Activated naive CD4-positive, alpha-beta T cell treated with anti-CD3 and anti-CD28 coated beads for 36 hours (primary cell): ENCODE measurements at regions of chr2 and their contacts with region 1.

Region 1: GRCh38 chr2:64750817-64751285 is 97.1 kb upstream of the SERTAD2 start:
- DNase-seq: peak; percentile 99
- H3K4me3 Mint-ChIP-seq: peak overlapping the region; percentile 99
- H3K27ac Mint-ChIP-seq: peak overlapping the region; percentile 89
- H3K4me1 Mint-ChIP-seq: peaks cover 30% of the 10 kb centered on the region
- H3K27me3 Mint-ChIP-seq: no peaks in the 10 kb centered on the region

Region 2: GRCh38 chr2:64144057-64145013 is 606.5 kb before region 1 on chr2 and contains the start of gene PELI1:
- CTCF ChIA-PET with region 1: no interaction called
- intact Hi-C with region 1: loop called (anchors 1 kb)
- DNase-seq: peak; percentile 98
- H3K4me3 Mint-ChIP-seq: peak within 1 kb of the TSS; percentile 94
- H3K27ac Mint-ChIP-seq: peak within 1 kb of the TSS; percentile 94
- H3K4me1 Mint-ChIP-seq: peaks cover 31% of the 10 kb centered on the region
- H3K27me3 Mint-ChIP-seq: no peaks in the 10 kb centered on the region
- total RNA-seq, gene PELI1: 25.7 to 28.0 TPM

Region 3: GRCh38 chr2:64599469-64599868 is 151.4 kb before region 1 on chr2:
- CTCF ChIA-PET with region 1: no interaction called
- intact Hi-C with region 1: no loop called
- DNase-seq: no peak
- H3K4me3 Mint-ChIP-seq: no peak overlapping the region
- H3K27ac Mint-ChIP-seq: no peak overlapping the region
- H3K4me1 Mint-ChIP-seq: peaks cover 8% of the 10 kb centered on the region
- H3K27me3 Mint-ChIP-seq: no peaks in the 10 kb centered on the region

Region 4: DNA sequence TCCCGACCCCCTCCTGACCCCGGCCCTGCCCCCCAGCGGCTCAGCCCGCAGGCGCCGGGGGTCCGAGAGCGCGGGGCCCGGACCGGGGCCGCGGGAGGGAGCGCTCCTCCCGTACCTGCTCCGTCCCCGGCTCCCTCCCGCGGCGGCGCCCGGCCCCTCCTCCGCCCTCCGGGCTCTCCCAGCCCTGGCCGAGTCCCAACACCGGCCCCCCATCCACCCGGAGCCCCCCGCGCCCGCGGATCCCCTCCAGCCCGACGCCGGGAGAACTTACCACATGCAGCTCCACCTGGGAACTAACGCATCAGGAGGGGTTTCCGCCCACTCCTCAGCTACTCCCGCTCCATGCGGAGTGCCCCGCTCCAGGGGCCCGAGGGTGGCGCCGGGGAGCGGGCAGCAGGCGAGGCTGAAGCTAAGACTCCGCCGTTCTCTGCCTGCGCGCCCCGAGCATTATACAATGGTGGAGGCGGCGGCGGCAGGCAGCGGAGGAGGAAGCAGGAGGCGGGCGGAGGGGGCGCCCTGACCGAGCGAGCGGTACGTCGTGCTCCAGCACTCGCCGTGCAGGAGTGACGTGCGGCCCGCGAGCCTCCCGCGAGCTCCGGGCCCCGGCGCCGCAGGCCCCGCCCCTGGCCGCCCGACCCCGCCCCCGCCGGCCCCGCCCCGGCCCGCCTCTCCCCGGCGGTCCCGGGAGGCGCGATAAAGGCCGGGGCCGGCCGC is 97.3 kb before region 1 on chr2 and contains the start of gene SERTAD2:
- CTCF ChIA-PET with region 1: interaction called, 37 read pairs
- intact Hi-C with region 1: loop called (anchors 1 kb)
- DNase-seq: peak; percentile 85
- H3K4me3 Mint-ChIP-seq: peak within 1 kb of the TSS; percentile 79
- H3K27ac Mint-ChIP-seq: peak within 1 kb of the TSS; percentile 83
- H3K4me1 Mint-ChIP-seq: peaks cover 74% of the 10 kb centered on the region
- H3K27me3 Mint-ChIP-seq: no peaks in the 10 kb centered on the region
- total RNA-seq, gene SERTAD2: 11.4 to 11.6 TPM

Region 5: GRCh38 chr2:64730551-64731262 is 20.1 kb before region 1 on chr2:
- CTCF ChIA-PET with region 1: interaction called, 8 read pairs
- intact Hi-C with region 1: loop called (anchors 1 kb)
- DNase-seq: peak; percentile 49
- H3K4me3 Mint-ChIP-seq: peak overlapping the region; percentile 78
- H3K27ac Mint-ChIP-seq: peak overlapping the region; percentile 90
- H3K4me1 Mint-ChIP-seq: peaks cover 63% of the 10 kb centered on the region
- H3K27me3 Mint-ChIP-seq: no peaks in the 10 kb centered on the region

Region 6: GRCh38 chr2:64831134-64831976 is 80.5 kb after region 1 on chr2:
- CTCF ChIA-PET with region 1: interaction called, 18 read pairs
- intact Hi-C with region 1: loop called (anchors 1 kb)
- DNase-seq: peak; percentile 94
- H3K4me3 Mint-ChIP-seq: peak overlapping the region; percentile 52
- H3K27ac Mint-ChIP-seq: peak overlapping the region; percentile 81
- H3K4me1 Mint-ChIP-seq: peaks cover 16% of the 10 kb centered on the region
- H3K27me3 Mint-ChIP-seq: peaks cover 5% of the 10 kb centered on the region

Region 7: GRCh38 chr2:65432227-65433190 is 681.7 kb after region 1 on chr2 and contains the start of gene SPRED2:
- CTCF ChIA-PET with region 1: no interaction called
- intact Hi-C with region 1: loop called (anchors 10 kb)
- DNase-seq: peak; percentile 89
- H3K4me3 Mint-ChIP-seq: peak within 1 kb of the TSS; percentile 91
- H3K27ac Mint-ChIP-seq: peak within 1 kb of the TSS; percentile 75
- H3K4me1 Mint-ChIP-seq: peaks cover 11% of the 10 kb centered on the region
- H3K27me3 Mint-ChIP-seq: peaks cover 26% of the 10 kb centered on the region
- total RNA-seq, gene SPRED2: 8.0 to 11.4 TPM